ENCODE measurements at regions of chr19 and their contacts with region 1.

Region 1: GRCh38 chr19:55653758-55654539 is 886 bp upstream of the U2AF2 start:
- DNase-seq: peak; percentile 100
- H3K4me3 ChIP-seq: peak overlapping the region in 2 of 3 donors; percentile 27 to 76
- H3K27ac ChIP-seq: peak overlapping the region; percentile 94 to 99 (median 96)
- H3K4me1 ChIP-seq: peaks cover 41 to 43% of the 10 kb centered on the region in 2 donors
- H3K27me3 ChIP-seq: no peaks in the 10 kb centered on the region
- CTCF ChIP-seq: peak; percentile 96 to 100 (median 100)
- POLR2A ChIP-seq: peak; percentile 78 to 88

Region 2: GRCh38 chr19:55385740-55386529 is 268.0 kb before region 1 on chr19 and contains the start of gene RPL28:
- intact Hi-C with region 1: loop called (anchors 10 kb)
- DNase-seq: peak; percentile 98 to 99
- H3K4me3 ChIP-seq: peak within 1 kb of the TSS; percentile 11 to 89 (median 62)
- H3K27ac ChIP-seq: peak within 1 kb of the TSS; percentile 81 to 98 (median 98)
- H3K4me1 ChIP-seq: peaks cover 35 to 50% of the 10 kb centered on the region in 2 donors
- H3K27me3 ChIP-seq: no peaks in the 10 kb centered on the region
- CTCF ChIP-seq: no peak
- POLR2A ChIP-seq: peak; percentile 87 to 99
- total RNA-seq, gene RPL28: 156 to 404 (median 205) TPM

Region 3: GRCh38 chr19:55611983-55612645 is 41.8 kb before region 1 on chr19:
- intact Hi-C with region 1: no loop called
- DNase-seq: no peak
- H3K4me3 ChIP-seq: no peak overlapping the region
- H3K27ac ChIP-seq: no peak overlapping the region
- H3K4me1 ChIP-seq: no peaks in the 10 kb centered on the region
- H3K27me3 ChIP-seq: no peaks in the 10 kb centered on the region
- CTCF ChIP-seq: no peak
- POLR2A ChIP-seq: no peak

Region 4: DNA sequence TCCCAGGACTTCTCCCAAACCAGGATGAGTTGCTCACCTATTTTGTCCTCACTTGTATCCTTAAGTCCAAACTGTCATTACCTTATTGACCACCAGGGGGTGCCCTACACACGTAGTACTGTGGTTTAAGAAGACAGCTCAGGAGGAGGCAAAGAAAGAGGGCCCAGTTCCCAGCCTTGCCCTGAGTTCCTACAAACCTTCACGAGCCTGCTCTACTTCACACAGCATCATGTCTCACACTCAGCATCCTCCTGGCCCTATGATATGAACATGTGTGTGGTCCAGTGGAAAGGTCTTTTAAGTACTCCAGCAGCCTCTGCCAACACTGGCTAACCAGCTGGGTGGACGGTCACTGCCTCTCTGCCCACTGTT is 21.5 kb before region 1 on chr19:
- intact Hi-C with region 1: no loop called
- DNase-seq: peak; percentile 89 to 91
- H3K4me3 ChIP-seq: no peak overlapping the region
- H3K27ac ChIP-seq: no peak overlapping the region
- H3K4me1 ChIP-seq: peaks cover 15 to 19% of the 10 kb centered on the region in 2 donors
- H3K27me3 ChIP-seq: no peaks in the 10 kb centered on the region
- CTCF ChIP-seq: peak; percentile 43 to 92 (median 85)
- POLR2A ChIP-seq: no peak

Region 5: DNA sequence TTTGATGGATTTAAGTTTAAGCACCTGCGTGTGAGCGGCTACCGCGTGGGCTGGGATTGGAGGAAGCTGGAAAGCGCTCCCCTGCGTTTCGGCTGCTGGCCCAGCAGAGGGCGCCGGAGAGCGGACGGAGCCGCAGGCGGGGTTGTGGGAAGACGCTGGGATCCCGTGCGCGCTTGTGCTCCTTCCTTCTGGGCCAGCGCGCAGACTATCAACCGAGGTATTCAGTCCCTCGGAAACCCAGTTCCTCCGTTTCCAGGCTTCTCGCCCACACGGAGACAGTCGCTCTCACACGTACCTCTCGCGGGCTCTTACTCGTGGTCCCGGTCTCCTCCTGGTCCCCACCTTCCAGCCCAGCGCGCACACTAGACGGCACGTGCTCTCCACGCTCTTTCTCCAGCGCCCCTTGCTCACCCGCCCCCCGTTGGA is 49.9 kb after region 1 on chr19:
- intact Hi-C with region 1: no loop called
- DNase-seq: peak; percentile 42 to 44
- H3K4me3 ChIP-seq: no peak overlapping the region
- H3K27ac ChIP-seq: no peak overlapping the region
- H3K4me1 ChIP-seq: no peaks in the 10 kb centered on the region
- H3K27me3 ChIP-seq: no peaks in the 10 kb centered on the region
- CTCF ChIP-seq: peak; percentile 39 to 81 (median 51)
- POLR2A ChIP-seq: no peak

Region 6: GRCh38 chr19:55738302-55738701 is 84.4 kb after region 1 on chr19 and contains the start of gene NLRP9:
- intact Hi-C with region 1: no loop called
- DNase-seq: no peak
- H3K4me3 ChIP-seq: no peak within 1 kb of the TSS
- H3K27ac ChIP-seq: no peak within 1 kb of the TSS
- H3K4me1 ChIP-seq: no peaks in the 10 kb centered on the region
- H3K27me3 ChIP-seq: no peaks in the 10 kb centered on the region
- CTCF ChIP-seq: no peak
- POLR2A ChIP-seq: no peak
- total RNA-seq, gene NLRP9: not detected